Heart left ventricle (tissue), 16 donors: ENCODE measurements at regions of chr6 and their contacts with region 1.

Region 1: DNA sequence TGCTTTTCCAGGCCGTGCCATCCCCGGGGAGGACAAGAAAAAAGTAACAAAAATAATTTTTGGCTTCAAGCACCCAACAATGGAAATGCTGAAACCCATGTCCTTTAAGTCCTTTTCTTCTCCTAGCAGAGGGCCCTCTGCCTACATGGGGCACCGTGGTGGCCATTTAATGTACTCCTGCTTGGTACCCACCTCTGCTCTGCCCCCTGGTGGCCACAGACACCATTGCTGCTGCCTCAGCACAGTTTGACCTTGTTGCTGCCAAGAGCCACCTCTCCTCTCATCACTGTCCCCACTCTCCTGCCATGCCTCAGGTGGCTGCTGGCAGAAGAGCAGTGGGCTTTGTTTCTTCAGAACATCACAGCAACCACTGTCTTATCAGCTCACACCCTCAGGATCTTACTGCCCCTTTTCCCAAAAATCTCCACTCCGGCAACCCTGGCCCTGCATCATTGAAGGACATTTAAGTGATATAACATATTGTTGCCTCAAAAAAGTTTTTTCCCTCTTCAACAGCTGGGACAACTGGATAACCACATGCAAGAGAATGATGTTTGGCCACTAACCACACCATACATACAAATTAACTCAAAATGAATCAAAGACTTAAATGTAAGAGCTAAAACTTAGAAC is 12.9 kb upstream of the ARMC2 start:
- DNase-seq: peak; percentile 85 to 91 (median 88)
- ATAC-seq: peak; percentile 78 to 96 (median 94)
- H3K4me3 ChIP-seq: no peak overlapping the region
- H3K27ac ChIP-seq: peak overlapping the region in 4 of 12 donors; percentile 3 to 34 (median 14)
- H3K4me1 ChIP-seq: peaks cover 0 to 39% (median 1%) of the 10 kb centered on the region in 12 donors
- H3K27me3 ChIP-seq: no peaks in the 10 kb centered on the region
- CTCF ChIP-seq: peak in 11 of 12 donors; percentile 85 to 98 (median 95)
- POLR2A ChIP-seq: no peak

Region 2: DNA sequence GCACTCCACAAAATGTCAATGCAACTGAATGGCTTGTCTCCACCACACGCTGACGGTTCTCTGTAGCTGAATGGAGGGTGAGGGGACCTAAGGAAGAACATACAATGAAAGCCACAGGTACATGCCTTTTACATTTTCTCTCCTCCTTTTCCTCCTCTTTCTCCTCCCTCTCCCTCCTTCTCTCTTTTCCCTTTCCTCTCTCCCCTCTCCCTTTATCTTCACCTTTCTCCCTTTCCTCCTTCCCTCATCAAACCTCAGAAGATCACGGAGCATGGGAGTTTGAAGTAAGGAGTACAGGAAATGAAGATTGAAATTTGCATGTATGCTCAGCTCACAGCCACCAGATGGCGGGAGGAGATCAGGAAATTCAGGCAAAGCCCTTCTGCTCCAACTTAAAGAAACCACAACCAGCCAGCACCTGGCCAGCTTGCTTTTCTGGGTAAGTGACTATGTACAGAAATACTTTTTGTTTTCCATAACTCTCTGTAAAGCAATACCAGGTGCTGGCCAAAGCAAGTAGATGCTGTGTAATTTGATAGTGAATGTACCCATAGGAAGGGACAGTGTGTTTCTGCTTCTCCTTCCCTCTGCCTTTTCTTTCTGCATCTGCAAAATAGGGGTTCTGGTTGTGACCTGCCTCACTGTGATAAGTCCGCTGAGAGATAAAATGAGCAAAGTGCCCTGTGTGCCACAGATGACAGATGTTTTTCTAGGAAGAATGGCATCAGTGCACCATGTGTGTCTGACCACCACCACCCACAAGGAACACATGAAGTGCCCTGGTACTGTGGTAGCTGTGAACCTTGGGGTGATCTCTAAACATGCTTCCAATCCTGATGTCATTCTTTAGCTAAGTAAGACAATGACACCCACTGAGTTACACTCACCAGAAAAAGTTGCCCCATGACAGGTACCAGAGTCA is 293.2 kb before region 1 on chr6:
- intact Hi-C with region 1: loop called (anchors 1 to 5 kb)
- DNase-seq: peak; percentile 61 to 76 (median 70)
- ATAC-seq: peak; percentile 54 to 86 (median 80)
- H3K4me3 ChIP-seq: no peak overlapping the region
- H3K27ac ChIP-seq: no peak overlapping the region
- H3K4me1 ChIP-seq: peaks cover 0 to 14% (median 0%) of the 10 kb centered on the region in 12 donors
- H3K27me3 ChIP-seq: no peaks in the 10 kb centered on the region
- CTCF ChIP-seq: peak; percentile 68 to 92 (median 89)
- POLR2A ChIP-seq: no peak

Region 3: GRCh38 chr6:108782179-108783041 is 52.9 kb before region 1 on chr6:
- intact Hi-C with region 1: loop called in 3 of 10 experiments (anchors 2 to 10 kb)
- DNase-seq: peak; percentile 81 to 88 (median 83)
- ATAC-seq: peak; percentile 85 to 96 (median 94)
- H3K4me3 ChIP-seq: peak overlapping the region in 11 of 12 donors; percentile 4 to 66 (median 54)
- H3K27ac ChIP-seq: peak overlapping the region in 4 of 12 donors; percentile 25 to 68 (median 55)
- H3K4me1 ChIP-seq: peaks cover 0 to 15% (median 6%) of the 10 kb centered on the region in 12 donors
- H3K27me3 ChIP-seq: no peaks in the 10 kb centered on the region
- CTCF ChIP-seq: peak; percentile 65 to 88 (median 78)
- POLR2A ChIP-seq: no peak

Region 4: GRCh38 chr6:108874470-108875160 is 39.3 kb after region 1 on chr6:
- intact Hi-C with region 1: loop called in 1 of 10 experiments (anchors 5 kb)
- DNase-seq: no peak
- ATAC-seq: peak in 1 of 4 donors; percentile 24
- H3K4me3 ChIP-seq: peak overlapping the region in 1 of 12 donors; percentile 18
- H3K27ac ChIP-seq: peak overlapping the region in 11 of 12 donors; percentile 31 to 93 (median 75)
- H3K4me1 ChIP-seq: peaks cover 0 to 69% (median 50%) of the 10 kb centered on the region in 12 donors
- H3K27me3 ChIP-seq: no peaks in the 10 kb centered on the region
- CTCF ChIP-seq: no peak
- POLR2A ChIP-seq: no peak

Region 5: DNA sequence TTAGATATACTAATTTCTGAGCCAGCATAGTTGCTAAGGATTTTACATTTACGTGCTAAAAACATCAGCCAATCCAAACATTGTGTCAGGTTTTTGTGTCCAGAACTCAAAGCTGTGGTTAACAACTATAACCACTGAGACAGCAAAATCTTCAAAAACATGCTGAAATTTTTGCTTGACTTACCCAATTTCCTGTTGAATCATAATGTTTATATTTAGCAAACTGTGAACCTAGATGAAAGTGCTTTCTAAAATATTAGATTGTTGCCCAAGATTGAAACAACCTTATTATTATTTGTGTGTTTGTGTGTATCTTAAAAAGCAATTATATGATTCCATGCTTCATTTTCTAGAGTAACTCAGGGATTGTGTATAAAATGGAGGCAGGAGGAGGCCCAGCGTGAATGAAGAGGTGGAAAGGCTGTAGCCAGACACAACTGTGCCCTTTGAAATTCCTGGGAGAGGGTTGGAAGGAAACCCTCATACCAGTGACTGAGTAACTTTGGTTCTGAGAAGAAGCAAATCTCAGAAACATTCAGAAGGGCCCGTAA is 60.9 kb after region 1 on chr6:
- intact Hi-C with region 1: loop called in 2 of 10 experiments (anchors 2 to 5 kb)
- DNase-seq: no peak
- ATAC-seq: peak in 3 of 4 donors; percentile 29 to 45 (median 31)
- H3K4me3 ChIP-seq: no peak overlapping the region
- H3K27ac ChIP-seq: peak overlapping the region; percentile 40 to 90 (median 66)
- H3K4me1 ChIP-seq: peaks cover 0 to 58% (median 26%) of the 10 kb centered on the region in 12 donors
- H3K27me3 ChIP-seq: no peaks in the 10 kb centered on the region
- CTCF ChIP-seq: no peak
- POLR2A ChIP-seq: no peak